ENCODE measurements at regions of chr11 and their contacts with region 1.

Region 1: GRCh38 chr11:88016392-88017170 is 158.7 kb downstream of the RAB38 start:
- DNase-seq: peak; percentile 96
- ATAC-seq: peak; percentile 84
- H3K4me3 ChIP-seq: no peak overlapping the region
- H3K27ac ChIP-seq: no peak overlapping the region
- H3K4me1 ChIP-seq: peaks cover 21% of the 10 kb centered on the region
- H3K27me3 ChIP-seq: no peaks in the 10 kb centered on the region
- CTCF ChIP-seq: peak; percentile 97

Region 2: GRCh38 chr11:88231894-88232482 is 215.4 kb after region 1 on chr11:
- CTCF ChIA-PET with region 1: no interaction called
- POLR2A ChIA-PET with region 1: no interaction called
- intact Hi-C with region 1: loop called (anchors 1 kb)
- DNase-seq: peak; percentile 70
- ATAC-seq: peak; percentile 99
- H3K4me3 ChIP-seq: no peak overlapping the region
- H3K27ac ChIP-seq: no peak overlapping the region
- H3K4me1 ChIP-seq: no peaks in the 10 kb centered on the region
- H3K27me3 ChIP-seq: no peaks in the 10 kb centered on the region
- CTCF ChIP-seq: peak; percentile 86

Region 3: DNA sequence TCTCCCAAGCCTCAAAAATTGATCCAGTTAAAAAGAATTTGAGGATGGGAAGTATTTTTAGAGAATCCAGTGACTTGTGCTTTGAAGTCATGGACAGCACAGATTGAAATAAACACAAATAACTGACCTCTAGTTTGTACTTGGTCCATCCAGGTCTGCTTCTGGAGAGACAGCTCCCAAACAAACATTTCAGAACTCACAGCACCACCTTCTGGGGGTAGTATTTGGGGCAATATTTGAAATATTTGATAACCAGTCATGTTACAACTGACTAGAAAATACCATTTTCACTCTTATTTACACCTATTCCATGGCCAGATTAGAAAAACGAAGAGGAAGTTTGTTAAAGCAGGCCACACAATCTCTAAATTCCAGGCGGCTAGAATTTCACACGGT is 264.7 kb after region 1 on chr11:
- CTCF ChIA-PET with region 1: interaction called, 3 read pairs
- POLR2A ChIA-PET with region 1: no interaction called
- intact Hi-C with region 1: loop called (anchors 1 kb)
- DNase-seq: peak; percentile 44
- ATAC-seq: peak; percentile 31; the same call in 1 of the 2 replicates
- H3K4me3 ChIP-seq: no peak overlapping the region
- H3K27ac ChIP-seq: no peak overlapping the region
- H3K4me1 ChIP-seq: 0 out of 2 replicates have a peak, but pooled peaks cover 4% of the 10 kb centered on the region
- H3K27me3 ChIP-seq: no peaks in the 10 kb centered on the region
- CTCF ChIP-seq: peak; percentile 63

Measured in PC-3 (cell line).